ENCODE measurements at regions of chr11 and their contacts with region 1.

Region 1: GRCh38 chr11:84333221-84333620 is 1047.1 kb upstream of the CCDC90B start:
- DNase-seq: no peak

Region 2: DNA sequence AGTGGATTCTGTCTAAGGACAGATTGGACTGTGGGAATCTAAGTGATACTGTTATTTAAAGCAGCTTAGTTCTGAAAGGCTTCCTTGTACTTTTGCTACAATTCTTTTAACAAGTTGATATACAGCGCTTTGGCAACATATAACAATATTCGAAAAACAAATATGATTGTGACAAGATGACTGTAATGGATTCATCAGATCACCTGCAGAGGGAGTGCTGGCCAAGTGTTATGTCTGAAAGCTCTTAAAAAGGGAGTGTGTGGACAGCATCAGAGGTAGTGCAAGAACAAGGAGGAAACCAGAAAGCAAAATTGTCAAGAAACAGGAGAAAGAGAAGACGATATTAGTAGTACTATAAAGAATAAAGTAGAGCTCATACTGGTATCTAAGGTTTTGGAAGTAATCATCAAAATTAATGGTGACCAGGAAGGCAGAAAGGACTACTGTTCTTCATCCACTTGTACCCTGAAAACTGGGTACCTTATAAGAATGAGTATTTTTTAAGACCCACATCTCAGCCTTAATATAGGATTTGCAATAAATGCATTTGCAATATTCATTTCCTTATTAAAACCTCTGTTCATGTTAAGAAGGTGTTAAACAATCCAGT is 64.9 kb after region 1 on chr11:
- intact Hi-C with region 1: loop called in 1 of 2 experiments (anchors 2 kb)
- DNase-seq: no peak